ENCODE measurements at regions of chr17 and their contacts with region 1.

Region 1: GRCh38 chr17:60355663-60356594 is 36.0 kb downstream of the USP32 start:
- DNase-seq: no peak
- H3K4me3 Mint-ChIP-seq: no peak overlapping the region
- H3K27ac Mint-ChIP-seq: peak overlapping the region; percentile 67
- H3K4me1 Mint-ChIP-seq: peaks cover 42% of the 10 kb centered on the region
- H3K27me3 Mint-ChIP-seq: no peaks in the 10 kb centered on the region

Region 2: DNA sequence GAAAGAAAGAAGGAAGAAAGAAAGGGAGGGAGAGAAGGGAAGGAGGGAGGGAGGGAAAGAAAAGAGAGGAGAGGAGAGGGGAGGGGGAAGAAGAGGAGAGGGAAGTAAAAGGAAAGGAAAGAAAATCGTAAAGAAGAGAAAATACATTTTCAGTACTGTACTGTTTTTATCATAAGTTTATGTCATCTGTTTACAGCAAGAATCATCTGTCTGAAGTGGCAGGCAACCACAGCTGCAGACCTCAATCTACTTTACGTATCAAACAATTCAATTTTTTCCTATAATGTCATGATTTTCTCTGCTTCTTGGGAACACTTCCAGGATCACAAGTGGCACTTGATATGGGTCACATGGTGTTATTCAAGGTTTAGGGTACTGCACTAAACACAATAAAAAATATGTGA is 22.3 kb before region 1 on chr17:
- intact Hi-C with region 1: no loop called
- DNase-seq: no peak
- H3K4me3 Mint-ChIP-seq: no peak overlapping the region
- H3K27ac Mint-ChIP-seq: no peak overlapping the region
- H3K4me1 Mint-ChIP-seq: peaks cover 5% of the 10 kb centered on the region
- H3K27me3 Mint-ChIP-seq: no peaks in the 10 kb centered on the region

Region 3: GRCh38 chr17:60392042-60392844 is 36.3 kb after region 1 on chr17 and contains the start of gene USP32:
- intact Hi-C with region 1: loop called (anchors 1 kb)
- DNase-seq: peak; percentile 97
- H3K4me3 Mint-ChIP-seq: peak within 1 kb of the TSS; percentile 93
- H3K27ac Mint-ChIP-seq: peak within 1 kb of the TSS; percentile 97
- H3K4me1 Mint-ChIP-seq: peaks cover 50% of the 10 kb centered on the region
- H3K27me3 Mint-ChIP-seq: no peaks in the 10 kb centered on the region
- total RNA-seq, gene USP32: 31.9 and 36.3 TPM in 2 replicates

Region 4: DNA sequence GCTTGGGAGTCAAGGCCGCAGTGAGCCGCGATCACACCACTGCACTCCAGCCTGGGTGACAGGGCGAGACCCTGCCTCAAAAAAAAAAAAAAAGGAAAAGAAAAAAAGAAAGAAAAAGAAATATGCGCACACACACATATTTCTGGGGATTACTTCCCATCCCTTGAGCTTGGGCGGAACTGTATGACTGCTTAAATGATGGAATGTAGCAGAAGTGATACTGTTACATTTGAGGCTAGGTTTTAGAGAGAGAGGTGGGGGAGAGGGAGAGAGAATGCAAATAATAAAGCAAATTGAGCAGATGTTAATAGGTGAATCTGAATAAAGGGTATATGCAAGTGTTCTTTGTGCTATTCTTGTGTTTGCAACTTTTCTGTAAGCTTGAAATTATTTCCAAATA is 48.0 kb after region 1 on chr17:
- intact Hi-C with region 1: no loop called
- DNase-seq: no peak
- H3K4me3 Mint-ChIP-seq: no peak overlapping the region
- H3K27ac Mint-ChIP-seq: no peak overlapping the region
- H3K4me1 Mint-ChIP-seq: no peaks in the 10 kb centered on the region
- H3K27me3 Mint-ChIP-seq: peaks cover 2% of the 10 kb centered on the region

Measured in activated T-helper 2 cell treated with anti-CD3 and anti-CD28 coated beads, Interferon-gamma antibody, Interleukin-2, Interleukin-4, amounts not matched to agents 10 μg/mL and 5 μg/mL and 100 μg/mL, durations not matched to agents 14 hours and 24 hours and 36 hours (primary cell).